ENCODE measurements at regions of chr19 and their contacts with region 1.

Region 1: GRCh38 chr19:1039646-1040475 is at the start of gene ABCA7:
- DNase-seq: peak; percentile 98 to 100
- ATAC-seq: peak; percentile 91 to 97 (median 96)
- H3K4me3 ChIP-seq: peak within 1 kb of the TSS; percentile 30 to 73 (median 61)
- H3K27ac ChIP-seq: peak within 1 kb of the TSS in 6 of 10 donors; percentile 19 to 92 (median 48)
- H3K4me1 ChIP-seq: peaks cover 5 to 56% (median 29%) of the 10 kb centered on the region in 9 donors
- H3K27me3 ChIP-seq: no peaks in the 10 kb centered on the region
- CTCF ChIP-seq: peak in 2 of 9 donors; percentile 6 to 13
- total RNA-seq, gene ABCA7: 4.3 to 18.1 (median 5.6) TPM

Region 2: DNA sequence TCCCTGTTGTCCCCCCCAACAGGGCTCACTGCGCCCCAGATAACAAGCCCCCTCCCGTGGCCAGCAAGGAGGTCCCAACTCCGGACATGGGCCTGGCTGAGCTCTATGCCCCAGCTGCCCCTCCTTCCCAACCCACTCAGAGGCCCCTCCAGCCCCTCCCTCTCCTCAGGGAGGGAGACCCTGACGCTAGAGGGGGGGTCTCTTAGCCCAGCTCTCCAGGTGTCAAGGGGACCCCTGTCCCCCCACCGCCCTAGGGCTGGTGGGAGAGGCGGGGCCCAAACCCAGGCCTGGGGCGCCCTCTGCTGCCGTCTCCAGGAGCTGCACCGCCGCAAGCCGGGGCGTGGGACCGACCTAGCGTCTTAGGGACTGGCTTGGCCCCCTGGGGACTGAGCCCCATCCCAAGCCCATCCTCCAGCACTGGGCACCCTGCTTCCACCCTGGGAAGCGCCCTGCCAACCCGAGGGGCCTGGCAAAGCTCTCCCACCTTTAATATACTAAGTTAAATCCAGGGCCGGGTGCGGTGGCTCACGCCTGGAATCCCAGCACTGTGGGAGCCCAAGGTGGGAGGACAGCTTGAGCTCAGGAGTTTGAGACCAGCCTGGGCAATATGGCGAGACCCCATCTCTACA is 38.2 kb before region 1 on chr19:
- intact Hi-C with region 1: no loop called
- DNase-seq: peak in 1 of 2 donors; percentile 68
- ATAC-seq: peak; percentile 46 to 77 (median 65)
- H3K4me3 ChIP-seq: no peak overlapping the region
- H3K27ac ChIP-seq: no peak overlapping the region
- H3K4me1 ChIP-seq: peaks cover under 1 to 19% (median 13%) of the 10 kb centered on the region in 9 donors
- H3K27me3 ChIP-seq: peaks cover 21 to 70% (median 54%) of the 10 kb centered on the region in 7 donors
- CTCF ChIP-seq: peak; percentile 77 to 96 (median 90)

Region 3: DNA sequence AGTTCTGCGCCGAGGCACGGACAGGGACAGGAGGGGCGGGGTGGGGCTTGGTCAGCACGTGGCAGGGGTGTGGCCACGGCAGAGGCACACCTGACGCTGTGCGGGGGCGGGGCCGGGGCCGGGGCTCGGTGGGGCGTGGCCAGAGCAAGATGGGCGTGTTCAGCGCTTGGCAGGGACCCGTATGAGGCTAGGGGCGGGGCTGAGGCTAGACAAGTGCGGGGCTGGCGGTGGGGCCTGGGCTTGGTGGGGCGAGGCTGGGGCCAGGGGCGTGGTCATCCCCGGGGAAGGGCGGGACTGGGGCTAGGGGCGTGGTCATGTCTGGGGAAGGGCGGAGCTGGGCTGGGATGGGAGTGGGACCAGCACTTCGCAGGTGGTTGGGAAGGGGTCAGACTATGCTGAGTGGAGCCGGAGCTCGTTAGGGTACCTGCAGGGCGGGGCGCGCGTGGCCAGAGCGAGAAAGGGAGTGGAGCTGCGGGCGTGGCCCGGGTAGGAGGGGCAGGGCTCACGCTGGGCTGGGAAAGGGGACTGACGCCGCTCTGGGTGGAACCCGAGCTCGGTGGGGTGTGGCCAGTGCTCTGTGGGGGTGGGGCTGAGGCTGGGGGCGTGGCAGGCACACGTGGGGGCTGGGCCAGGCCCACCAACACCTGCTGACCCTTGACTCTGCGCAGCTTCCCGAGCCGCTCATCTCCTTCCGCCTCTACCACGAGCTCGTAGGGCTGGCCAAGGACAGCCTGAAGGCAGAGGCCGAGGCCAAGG is 42.5 kb after region 1 on chr19:
- intact Hi-C with region 1: loop called in 1 of 10 experiments (anchors 5 kb)
- DNase-seq: peak in 1 of 2 donors; percentile 38
- ATAC-seq: peak; percentile 18 to 58 (median 38)
- H3K4me3 ChIP-seq: peak overlapping the region in 3 of 10 donors; percentile 12 to 28 (median 23)
- H3K27ac ChIP-seq: no peak overlapping the region
- H3K4me1 ChIP-seq: peaks cover 0 to 46% (median 0%) of the 10 kb centered on the region in 9 donors
- H3K27me3 ChIP-seq: peaks cover 0 to 3% (median 0%) of the 10 kb centered on the region in 7 donors
- CTCF ChIP-seq: no peak

Region 4: GRCh38 chr19:1094975-1095701 is 55.3 kb after region 1 on chr19 and contains the start of gene POLR2E:
- intact Hi-C with region 1: loop called in 7 of 10 experiments (anchors 2 to 10 kb)
- DNase-seq: peak; percentile 98 to 99
- ATAC-seq: peak; percentile 95 to 98 (median 97)
- H3K4me3 ChIP-seq: peak within 1 kb of the TSS; percentile 72 to 98 (median 84)
- H3K27ac ChIP-seq: peak within 1 kb of the TSS in 9 of 10 donors; percentile 58 to 92 (median 86)
- H3K4me1 ChIP-seq: peaks cover 5 to 60% (median 38%) of the 10 kb centered on the region in 9 donors
- H3K27me3 ChIP-seq: no peaks in the 10 kb centered on the region
- CTCF ChIP-seq: no peak
- total RNA-seq, gene POLR2E: 111 to 215 (median 134) TPM

Region 5: DNA sequence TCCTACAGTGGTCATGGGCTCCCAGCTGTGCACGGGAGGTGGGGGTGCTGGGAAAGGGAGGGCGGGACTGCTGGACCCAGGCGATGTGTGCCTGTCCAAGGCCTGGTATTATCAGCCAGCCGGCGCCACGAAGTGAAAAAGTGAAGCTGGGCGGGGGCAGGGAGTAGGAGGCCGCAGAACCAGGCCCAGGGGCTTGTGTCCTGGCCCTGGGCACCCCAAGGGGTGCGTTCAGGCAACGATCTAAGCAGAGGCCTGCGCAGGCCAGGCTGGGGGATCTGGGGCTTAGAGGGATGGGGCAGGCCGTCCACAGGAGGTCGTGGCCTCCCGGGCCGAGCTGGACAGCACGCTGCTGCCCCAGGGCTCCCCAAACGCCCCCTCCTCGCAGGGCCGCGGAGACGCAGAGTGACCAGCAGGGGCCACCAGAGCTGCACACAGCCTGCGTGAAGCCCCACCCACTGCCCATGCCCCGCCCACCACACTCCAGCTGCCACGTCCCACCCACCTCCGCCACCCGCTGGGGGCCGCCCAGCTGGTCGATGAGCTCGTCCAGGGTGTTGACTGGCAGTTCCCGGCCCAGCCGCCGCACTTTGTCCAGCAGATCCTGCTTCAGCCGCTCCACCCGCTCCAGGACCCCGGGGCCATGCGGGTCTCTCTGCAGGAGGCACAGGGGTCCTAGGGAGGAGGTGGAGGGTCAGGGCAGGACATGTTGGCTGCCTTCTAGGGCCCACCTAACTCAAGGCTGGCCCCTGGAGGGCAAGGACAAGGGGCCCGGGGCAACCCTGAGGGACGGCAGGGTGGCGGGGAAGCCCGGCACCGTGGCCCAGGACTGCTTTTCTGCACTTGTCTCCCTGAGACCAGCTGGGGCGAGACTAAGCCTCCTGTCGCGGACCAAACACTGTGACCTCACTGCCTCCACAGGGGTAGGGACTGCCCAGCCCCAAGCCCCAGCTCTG is 73.4 kb after region 1 on chr19:
- intact Hi-C with region 1: no loop called
- DNase-seq: peak; percentile 97 to 98
- ATAC-seq: peak; percentile 87 to 95 (median 93)
- H3K4me3 ChIP-seq: peak overlapping the region in 6 of 10 donors; percentile 9 to 40 (median 21)
- H3K27ac ChIP-seq: peak overlapping the region in 9 of 10 donors; percentile 40 to 79 (median 71)
- H3K4me1 ChIP-seq: peaks cover 12 to 31% (median 19%) of the 10 kb centered on the region in 9 donors
- H3K27me3 ChIP-seq: no peaks in the 10 kb centered on the region
- CTCF ChIP-seq: peak in 8 of 9 donors; percentile 88 to 100 (median 96)

Measured in heart right ventricle (tissue), 16 donors.